ENCODE measurements at regions of chrX and their contacts with region 1.

Region 1: DNA sequence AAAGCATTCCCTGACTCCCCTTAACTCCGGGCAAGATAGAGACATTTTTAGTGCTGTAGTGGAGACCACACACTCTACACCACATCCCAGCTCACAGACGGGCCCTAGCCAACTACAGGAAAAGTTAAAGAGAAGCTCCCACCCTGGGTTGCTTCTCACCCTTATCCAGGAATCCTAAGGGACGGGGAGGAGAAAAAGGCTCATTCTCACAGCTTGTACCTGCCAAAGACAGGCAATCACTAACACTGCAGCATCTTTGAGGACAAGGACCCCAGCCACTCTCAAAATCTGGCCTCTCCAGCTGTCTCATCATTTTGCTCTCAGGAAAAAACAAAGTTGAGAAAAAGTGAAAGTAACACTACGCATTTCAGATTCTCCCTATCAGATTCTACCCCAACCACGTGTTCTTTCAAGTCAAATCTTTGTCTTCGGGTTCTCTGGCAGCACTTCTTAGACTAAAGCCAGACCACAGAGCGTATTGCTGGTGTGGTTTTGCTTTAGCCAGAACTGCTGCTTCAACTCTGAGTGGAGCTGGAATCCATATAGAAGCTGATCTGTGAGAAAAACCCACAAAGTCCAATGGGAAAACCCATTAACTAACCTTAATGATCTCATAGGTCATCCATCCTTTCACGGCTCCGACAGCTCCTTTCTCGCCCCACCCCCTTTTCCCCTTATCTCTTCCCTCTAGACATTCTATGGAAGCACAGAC is 605.9 kb upstream of the DIPK2B start:
- DNase-seq: peak; percentile 4 to 75 (median 71)
- H3K4me3 ChIP-seq: peak overlapping the region; percentile 55
- H3K4me3 Mint-ChIP-seq: peak overlapping the region; percentile 76 to 85 (median 82)
- H3K27ac ChIP-seq: peak overlapping the region; percentile 57
- H3K27ac Mint-ChIP-seq: peak overlapping the region; percentile 85 to 96 (median 94)
- H3K4me1 ChIP-seq: peaks cover 15% of the 10 kb centered on the region
- H3K4me1 Mint-ChIP-seq: peaks cover 24 to 79% (median 67%) of the 10 kb centered on the region in 3 donors
- H3K27me3 ChIP-seq: no peaks in the 10 kb centered on the region
- H3K27me3 Mint-ChIP-seq: peaks cover 0 to 3% of the 10 kb centered on the region in 2 donors

Region 2: DNA sequence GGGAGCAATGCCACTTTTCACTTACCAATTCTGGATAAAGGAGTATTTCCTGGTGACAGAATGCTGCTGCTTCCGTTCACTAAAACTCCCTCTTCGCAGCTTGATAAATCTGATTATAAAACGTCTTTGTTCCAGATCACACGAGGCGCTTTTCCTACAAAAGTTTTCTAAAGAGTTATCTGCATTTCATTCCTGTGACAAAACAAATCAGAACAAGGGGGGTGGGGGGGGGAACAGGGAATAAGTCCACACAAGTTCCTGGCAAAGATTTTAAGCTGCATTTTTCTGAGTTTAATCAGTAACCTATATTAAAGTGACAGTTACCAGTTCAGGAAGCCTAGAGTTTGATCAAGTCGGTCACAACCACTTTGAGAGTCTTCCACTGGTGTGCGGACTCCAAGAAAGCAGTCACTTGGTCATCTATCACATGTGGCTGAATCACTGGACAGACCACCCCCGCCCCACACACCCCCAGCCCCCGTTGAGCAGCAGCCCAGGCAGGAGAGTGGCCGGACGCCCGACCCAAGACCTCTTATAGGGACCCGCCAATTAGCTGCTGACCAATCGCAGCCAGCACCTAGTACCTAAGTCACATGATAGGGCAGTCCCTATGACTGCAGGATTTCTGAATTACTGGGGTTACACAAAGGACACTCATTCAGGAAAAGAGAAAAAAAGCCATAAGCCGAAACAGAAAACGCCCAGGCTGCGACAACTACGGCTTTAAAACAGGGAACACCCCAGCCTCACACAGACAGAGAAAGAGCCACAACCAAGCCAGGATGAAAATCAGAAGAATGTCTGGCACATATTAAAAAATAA is 36.6 kb before region 1 on chrX:
- CTCF ChIA-PET with region 1: interaction called, 3 read pairs
- POLR2A ChIA-PET with region 1: interaction called, 20 read pairs
- DNase-seq: peak in 3 of 5 donors; percentile 4 to 50 (median 31)
- H3K4me3 ChIP-seq: peak overlapping the region; percentile 64
- H3K4me3 Mint-ChIP-seq: peak overlapping the region; percentile 90 to 94 (median 92)
- H3K27ac ChIP-seq: peak overlapping the region; percentile 57
- H3K27ac Mint-ChIP-seq: peak overlapping the region; percentile 51 to 97 (median 92)
- H3K4me1 ChIP-seq: peaks cover 27% of the 10 kb centered on the region
- H3K4me1 Mint-ChIP-seq: peaks cover 37 to 65% (median 64%) of the 10 kb centered on the region in 3 donors
- H3K27me3 ChIP-seq: no peaks in the 10 kb centered on the region
- H3K27me3 Mint-ChIP-seq: peaks cover 0 to 7% of the 10 kb centered on the region in 2 donors

Region 3: GRCh38 chrX:45849253-45849862 is 42.8 kb after region 1 on chrX:
- CTCF ChIA-PET with region 1: interaction called, 28 read pairs
- POLR2A ChIA-PET with region 1: interaction called, 3 read pairs
- DNase-seq: peak in 3 of 5 donors; percentile 16 to 45 (median 19)
- H3K4me3 ChIP-seq: peak overlapping the region; percentile 65
- H3K4me3 Mint-ChIP-seq: peak overlapping the region; percentile 93 to 96 (median 95)
- H3K27ac ChIP-seq: no peak overlapping the region
- H3K27ac Mint-ChIP-seq: peak overlapping the region in 5 of 8 donors; percentile 2 to 92 (median 63)
- H3K4me1 ChIP-seq: no peaks in the 10 kb centered on the region
- H3K4me1 Mint-ChIP-seq: peaks cover 18 to 21% (median 18%) of the 10 kb centered on the region in 3 donors
- H3K27me3 ChIP-seq: no peaks in the 10 kb centered on the region
- H3K27me3 Mint-ChIP-seq: peaks cover 0 to 3% of the 10 kb centered on the region in 2 donors

Measured in CD8-positive, alpha-beta memory T cell (primary cell).